HEK293T (cell line): ENCODE measurements at regions of chr5 and their contacts with region 1.

Region 1: GRCh38 chr5:177607452-177608192 is 7.7 kb downstream of the B4GALT7 start:
- DNase-seq: peak; percentile 93

Region 2: DNA sequence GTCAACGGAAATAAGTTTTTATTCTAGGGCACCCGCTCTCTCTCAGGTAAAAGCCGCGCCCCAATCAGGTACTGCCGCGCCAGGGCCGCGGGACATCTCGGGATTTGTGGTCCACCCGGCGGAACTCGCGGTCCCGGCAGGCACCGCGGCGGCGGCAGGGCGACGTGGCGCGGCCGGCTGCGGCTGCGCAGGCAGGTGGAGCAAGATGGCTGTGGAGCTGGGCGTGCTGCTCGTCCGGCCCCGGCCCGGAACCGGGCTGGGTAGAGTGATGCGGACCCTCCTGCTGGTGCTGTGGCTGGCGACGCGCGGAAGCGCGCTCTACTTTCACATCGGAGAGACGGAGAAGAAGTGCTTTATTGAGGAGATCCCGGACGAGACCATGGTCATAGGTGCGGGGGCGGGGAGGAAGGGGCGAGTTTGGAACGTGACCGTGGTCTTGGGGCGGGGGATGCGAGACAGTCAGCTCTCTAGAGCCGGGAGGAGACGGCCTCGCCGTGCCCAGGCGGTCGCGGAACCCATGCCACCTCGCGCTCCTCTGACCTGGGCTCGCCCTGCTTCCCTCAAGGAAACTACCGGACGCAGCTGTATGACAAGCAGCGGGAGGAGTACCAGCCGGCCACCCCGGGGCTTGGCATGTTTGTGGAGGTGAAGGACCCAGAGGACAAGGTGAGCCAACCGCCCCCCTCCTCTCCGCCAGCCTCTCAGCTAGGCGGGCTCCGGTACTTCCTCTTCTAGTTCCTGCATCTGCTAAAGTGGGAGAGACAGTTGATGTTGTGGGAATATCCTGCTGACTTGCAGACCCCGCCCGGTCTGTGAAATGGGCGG is 15.4 kb before region 1 on chr5 and contains the start of gene TMED9:
- CTCF ChIA-PET with region 1: interaction called, 12 read pairs
- POLR2A ChIA-PET with region 1: interaction called, 6 read pairs
- DNase-seq: peak; percentile 96